Dorsolateral prefrontal cortex (tissue), 120 donors: ENCODE measurements at regions of chr9 and their contacts with region 1.

Region 1: DNA sequence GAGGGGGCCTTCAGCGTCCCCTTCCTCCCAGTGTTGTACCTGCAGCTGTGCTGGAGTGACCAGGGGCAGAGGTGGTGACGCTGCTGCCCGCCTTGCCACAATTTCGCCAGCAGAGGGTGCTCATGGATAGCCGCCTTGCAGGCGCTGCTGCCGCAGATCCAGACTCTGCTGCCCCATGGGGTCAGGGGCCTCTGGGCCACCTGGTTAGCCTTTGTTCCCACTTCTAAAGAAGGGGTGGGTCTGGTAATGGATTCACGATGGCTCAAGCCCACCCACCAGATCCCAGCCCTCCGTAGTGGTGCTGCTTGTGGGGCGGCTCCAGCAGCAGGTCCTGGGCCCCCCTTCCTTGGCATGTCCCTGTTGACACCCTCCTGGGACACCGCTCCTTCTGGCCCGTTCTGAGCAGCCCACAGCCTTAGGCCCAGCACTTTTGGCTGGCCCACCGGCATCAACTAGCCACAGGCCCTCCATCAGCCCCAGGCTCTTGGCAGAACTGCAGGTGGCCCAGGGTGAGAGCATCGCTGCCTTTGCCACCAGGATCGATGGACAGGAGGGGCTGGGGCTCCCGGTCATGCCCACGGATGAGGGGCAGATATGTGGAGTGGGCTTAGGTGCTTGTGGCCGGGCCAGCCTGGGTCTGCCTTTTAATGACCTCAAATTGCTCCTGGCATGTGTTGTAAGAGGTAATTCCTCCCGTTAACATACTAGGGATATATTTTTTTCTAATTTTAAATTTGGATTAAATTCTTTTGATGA is 57.2 kb downstream of the COL5A1 start:
- DNase-seq: peak in 9 of 10 donors; percentile 43 to 81 (median 55)
- H3K4me3 ChIP-seq: no peak overlapping the region
- H3K27ac ChIP-seq: no peak overlapping the region
- H3K27me3 ChIP-seq: no peaks in the 10 kb centered on the region
- CTCF ChIP-seq: peak; percentile 41 to 93 (median 87)

Region 2: GRCh38 chr9:134732392-134733110 is 33.8 kb after region 1 on chr9:
- intact Hi-C with region 1: loop called in 1 of 2 experiments (anchors 2 kb)
- DNase-seq: no peak
- H3K4me3 ChIP-seq: no peak overlapping the region
- H3K27ac ChIP-seq: no peak overlapping the region
- H3K27me3 ChIP-seq: no peaks in the 10 kb centered on the region
- CTCF ChIP-seq: no peak

Region 3: GRCh38 chr9:135410831-135411473 is 712.2 kb after region 1 on chr9:
- intact Hi-C with region 1: loop called (anchors 10 kb)
- DNase-seq: no peak
- H3K4me3 ChIP-seq: no peak overlapping the region
- H3K27ac ChIP-seq: no peak overlapping the region
- H3K27me3 ChIP-seq: peaks cover 0 to 4% (median 0%) of the 10 kb centered on the region in 45 donors
- CTCF ChIP-seq: no peak